CD8-positive, alpha-beta T cell (primary cell): ENCODE measurements at regions of chr3 and their contacts with region 1.

Region 1: GRCh38 chr3:126134219-126134975 is 46.0 kb downstream of the ALDH1L1 start:
- DNase-seq: peak in 8 of 9 experiments; percentile 20 to 62 (median 46)
- ATAC-seq: peak; percentile 49
- H3K4me3 ChIP-seq: no peak overlapping the region
- H3K4me3 Mint-ChIP-seq: no peak overlapping the region
- H3K27ac ChIP-seq: no peak overlapping the region
- H3K27ac Mint-ChIP-seq: no peak overlapping the region
- H3K4me1 ChIP-seq: no peaks in the 10 kb centered on the region
- H3K4me1 Mint-ChIP-seq: peaks cover 2% of the 10 kb centered on the region
- H3K27me3 ChIP-seq: no peaks in the 10 kb centered on the region
- H3K27me3 Mint-ChIP-seq: peaks cover 23% of the 10 kb centered on the region
- CTCF ChIP-seq: peak; percentile 48

Region 2: DNA sequence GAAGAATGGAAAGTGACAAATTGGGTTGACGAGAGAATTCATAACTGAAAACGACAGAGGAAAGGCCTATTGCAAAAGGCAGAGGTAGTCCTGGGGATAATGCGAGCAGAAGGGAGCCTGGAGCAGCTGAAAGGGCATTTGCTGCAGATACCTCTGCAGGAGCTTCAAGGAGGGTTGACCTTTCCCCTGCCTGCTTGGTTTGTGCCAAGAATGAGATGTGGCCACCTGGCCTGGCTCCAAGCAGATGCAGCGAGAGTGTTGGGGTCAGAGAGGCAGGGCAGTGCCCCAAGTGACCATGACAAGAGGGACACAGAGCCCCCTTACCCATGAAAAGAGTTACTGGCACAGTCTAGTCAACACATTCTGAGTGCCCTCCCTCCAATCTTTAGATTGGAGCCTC is 94.0 kb before region 1 on chr3:
- CTCF ChIA-PET with region 1: no interaction called
- POLR2A ChIA-PET with region 1: no interaction called
- intact Hi-C with region 1: no loop called
- DNase-seq: no peak
- ATAC-seq: no peak
- H3K4me3 ChIP-seq: no peak overlapping the region
- H3K4me3 Mint-ChIP-seq: no peak overlapping the region
- H3K27ac ChIP-seq: no peak overlapping the region
- H3K27ac Mint-ChIP-seq: no peak overlapping the region
- H3K4me1 ChIP-seq: no peaks in the 10 kb centered on the region
- H3K4me1 Mint-ChIP-seq: no peaks in the 10 kb centered on the region
- H3K27me3 ChIP-seq: no peaks in the 10 kb centered on the region
- H3K27me3 Mint-ChIP-seq: no peaks in the 10 kb centered on the region
- CTCF ChIP-seq: no peak

Region 3: DNA sequence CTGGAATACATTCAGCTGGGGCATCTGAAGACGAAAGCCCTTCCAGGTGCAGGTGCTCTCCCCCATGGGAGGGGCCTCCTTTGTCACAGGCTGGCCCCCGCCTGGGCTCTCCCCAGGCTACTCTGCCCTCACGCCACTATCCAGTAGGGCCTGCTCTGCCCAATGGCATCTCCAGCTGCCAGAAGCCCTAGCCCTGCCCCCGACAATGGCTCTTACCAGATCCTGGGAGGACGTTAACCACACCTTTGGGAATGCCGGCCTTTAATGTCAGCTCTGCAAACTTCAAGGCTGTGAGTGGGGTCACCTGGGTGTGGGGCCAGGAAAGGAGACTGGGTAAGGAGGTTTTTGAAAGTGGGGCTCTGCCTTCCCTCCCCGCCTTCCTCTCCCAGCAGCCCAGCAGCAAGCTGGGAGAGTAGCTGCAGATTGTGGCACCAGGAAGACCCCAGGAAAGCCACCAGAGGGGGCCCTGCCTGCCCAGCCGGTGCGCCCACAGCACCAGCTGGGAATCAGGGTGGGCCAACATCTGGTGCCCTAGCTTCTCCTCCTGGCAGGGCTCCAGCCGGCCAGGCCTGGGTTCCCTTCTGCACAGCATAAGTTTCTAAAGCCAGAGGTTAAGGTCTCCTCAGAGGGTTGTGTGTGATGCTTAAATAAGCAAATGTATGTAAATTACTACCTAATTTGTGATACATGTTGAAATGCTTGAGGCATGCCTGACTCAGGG is 10.1 kb before region 1 on chr3:
- CTCF ChIA-PET with region 1: interaction called, 10 read pairs
- POLR2A ChIA-PET with region 1: no interaction called
- intact Hi-C with region 1: no loop called
- DNase-seq: peak in 2 of 9 experiments; percentile 2 to 42
- ATAC-seq: no peak
- H3K4me3 ChIP-seq: no peak overlapping the region
- H3K4me3 Mint-ChIP-seq: no peak overlapping the region
- H3K27ac ChIP-seq: no peak overlapping the region
- H3K27ac Mint-ChIP-seq: no peak overlapping the region
- H3K4me1 ChIP-seq: no peaks in the 10 kb centered on the region
- H3K4me1 Mint-ChIP-seq: no peaks in the 10 kb centered on the region
- H3K27me3 ChIP-seq: no peaks in the 10 kb centered on the region
- H3K27me3 Mint-ChIP-seq: peaks cover under 1% of the 10 kb centered on the region
- CTCF ChIP-seq: no peak

Region 4: GRCh38 chr3:126146525-126147146 is 12.2 kb after region 1 on chr3:
- CTCF ChIA-PET with region 1: interaction called, 11 read pairs
- POLR2A ChIA-PET with region 1: no interaction called
- intact Hi-C with region 1: no loop called
- DNase-seq: peak in 2 of 9 experiments; percentile 4 to 41
- ATAC-seq: no peak
- H3K4me3 ChIP-seq: no peak overlapping the region
- H3K4me3 Mint-ChIP-seq: no peak overlapping the region
- H3K27ac ChIP-seq: no peak overlapping the region
- H3K27ac Mint-ChIP-seq: no peak overlapping the region
- H3K4me1 ChIP-seq: no peaks in the 10 kb centered on the region
- H3K4me1 Mint-ChIP-seq: no peaks in the 10 kb centered on the region
- H3K27me3 ChIP-seq: no peaks in the 10 kb centered on the region
- H3K27me3 Mint-ChIP-seq: no peaks in the 10 kb centered on the region
- CTCF ChIP-seq: no peak

Region 5: GRCh38 chr3:126389112-126389793 is 254.9 kb after region 1 on chr3:
- CTCF ChIA-PET with region 1: interaction called, 4 read pairs
- POLR2A ChIA-PET with region 1: no interaction called
- intact Hi-C with region 1: loop called (anchors 2 to 5 kb)
- DNase-seq: peak in 5 of 9 experiments; percentile 4 to 56 (median 31)
- ATAC-seq: peak; percentile 40
- H3K4me3 ChIP-seq: no peak overlapping the region
- H3K4me3 Mint-ChIP-seq: peak overlapping the region; percentile 1
- H3K27ac ChIP-seq: no peak overlapping the region
- H3K27ac Mint-ChIP-seq: no peak overlapping the region
- H3K4me1 ChIP-seq: no peaks in the 10 kb centered on the region
- H3K4me1 Mint-ChIP-seq: peaks cover 4% of the 10 kb centered on the region
- H3K27me3 ChIP-seq: peaks cover 0 to 3% of the 10 kb centered on the region in 2 experiments
- H3K27me3 Mint-ChIP-seq: peaks cover 56% of the 10 kb centered on the region
- CTCF ChIP-seq: peak; percentile 16

Region 6: DNA sequence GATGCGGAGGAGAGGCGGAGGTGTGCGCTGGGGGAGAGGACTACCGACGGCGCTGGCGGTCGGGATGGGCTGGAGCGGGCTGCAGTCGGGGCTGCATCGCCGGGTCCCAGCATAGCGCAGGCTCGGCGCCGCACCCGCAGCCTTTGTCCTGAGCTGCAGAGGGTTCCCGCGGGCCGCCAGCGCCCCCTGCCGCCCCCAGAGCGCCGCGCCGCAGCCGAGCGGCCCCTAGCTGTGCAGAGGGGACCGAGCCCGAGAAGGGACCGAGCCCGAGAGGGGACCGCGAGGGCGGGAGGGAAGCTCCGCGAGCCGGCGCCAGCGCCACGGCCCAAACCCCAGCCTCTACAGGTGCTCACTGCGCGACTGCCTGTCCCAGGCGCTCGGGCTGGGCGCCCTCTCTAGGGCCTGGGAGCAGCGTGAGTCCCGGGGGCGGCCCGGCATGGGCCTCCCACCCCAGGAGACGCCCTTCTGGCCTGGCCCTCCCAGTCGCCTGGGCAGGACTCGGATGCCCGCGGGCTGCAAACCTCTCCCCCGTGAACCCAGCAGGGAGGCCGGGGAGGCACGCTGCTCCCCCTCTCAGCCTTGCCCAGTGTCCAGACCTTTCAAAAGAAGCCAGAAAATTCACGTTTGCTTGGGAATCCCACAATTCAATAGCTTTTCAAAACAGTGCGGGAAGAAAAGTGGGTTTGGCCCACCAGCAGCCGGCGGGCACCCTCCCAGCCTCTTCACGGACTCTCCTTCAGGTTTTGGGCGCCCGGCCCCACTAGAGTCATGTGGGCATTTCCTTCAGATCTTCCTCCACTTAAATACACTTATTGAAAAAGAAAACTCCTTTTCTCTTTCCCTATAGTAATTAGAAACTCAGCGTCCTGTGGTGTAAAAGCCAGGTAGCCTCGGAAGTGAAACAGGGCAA is 1321.4 kb after region 1 on chr3:
- CTCF ChIA-PET with region 1: no interaction called
- POLR2A ChIA-PET with region 1: no interaction called
- intact Hi-C with region 1: loop called in 1 of 2 experiments (anchors 10 kb)
- DNase-seq: peak in 7 of 9 experiments; percentile 4 to 47 (median 36)
- ATAC-seq: peak; percentile 65
- H3K4me3 ChIP-seq: no peak overlapping the region
- H3K4me3 Mint-ChIP-seq: no peak overlapping the region
- H3K27ac ChIP-seq: no peak overlapping the region
- H3K27ac Mint-ChIP-seq: no peak overlapping the region
- H3K4me1 ChIP-seq: peaks cover 11% of the 10 kb centered on the region
- H3K4me1 Mint-ChIP-seq: peaks cover 11% of the 10 kb centered on the region
- H3K27me3 ChIP-seq: peaks cover 9 to 18% of the 10 kb centered on the region in 2 experiments
- H3K27me3 Mint-ChIP-seq: peaks cover 70% of the 10 kb centered on the region
- CTCF ChIP-seq: peak; percentile 45

Region 7: GRCh38 chr3:127544192-127544802 is 1409.9 kb after region 1 on chr3:
- CTCF ChIA-PET with region 1: no interaction called
- POLR2A ChIA-PET with region 1: no interaction called
- intact Hi-C with region 1: loop called (anchors 1 to 10 kb)
- DNase-seq: peak; percentile 26 to 77 (median 66)
- ATAC-seq: peak; percentile 44
- H3K4me3 ChIP-seq: no peak overlapping the region
- H3K4me3 Mint-ChIP-seq: no peak overlapping the region
- H3K27ac ChIP-seq: no peak overlapping the region
- H3K27ac Mint-ChIP-seq: no peak overlapping the region
- H3K4me1 ChIP-seq: peaks cover 11% of the 10 kb centered on the region
- H3K4me1 Mint-ChIP-seq: peaks cover 11% of the 10 kb centered on the region
- H3K27me3 ChIP-seq: no peaks in the 10 kb centered on the region
- H3K27me3 Mint-ChIP-seq: no peaks in the 10 kb centered on the region
- CTCF ChIP-seq: peak; percentile 80